ENCODE measurements at regions of chr1 and their contacts with region 1.

Region 1: GRCh38 chr1:94417978-94418663 is at the start of gene ABCD3:
- DNase-seq: peak; percentile 95
- H3K4me3 ChIP-seq: peak within 1 kb of the TSS; percentile 87
- H3K4me3 Mint-ChIP-seq: no peak within 1 kb of the TSS
- H3K27ac Mint-ChIP-seq: peak within 1 kb of the TSS; percentile 74
- H3K4me1 ChIP-seq: peaks cover 27% of the 10 kb centered on the region
- H3K4me1 Mint-ChIP-seq: peaks cover 15% of the 10 kb centered on the region
- H3K27me3 ChIP-seq: no peaks in the 10 kb centered on the region
- H3K27me3 Mint-ChIP-seq: no peaks in the 10 kb centered on the region
- CTCF ChIP-seq: no peak
- total RNA-seq, gene ABCD3: 93.4 and 94.4 TPM in 2 replicates

Region 2: GRCh38 chr1:94342405-94342804 is 75.7 kb before region 1 on chr1:
- CTCF ChIA-PET with region 1: interaction called, 4 read pairs
- POLR2A ChIA-PET with region 1: no interaction called
- intact Hi-C with region 1: loop called (anchors 1 kb)
- DNase-seq: peak; percentile 74 to 83
- H3K4me3 ChIP-seq: no peak overlapping the region
- H3K4me3 Mint-ChIP-seq: peak overlapping the region; percentile 47
- H3K27ac Mint-ChIP-seq: peak overlapping the region; percentile 80
- H3K4me1 ChIP-seq: peaks cover 56% of the 10 kb centered on the region
- H3K4me1 Mint-ChIP-seq: peaks cover 57% of the 10 kb centered on the region
- H3K27me3 ChIP-seq: no peaks in the 10 kb centered on the region
- H3K27me3 Mint-ChIP-seq: no peaks in the 10 kb centered on the region
- CTCF ChIP-seq: no peak

Region 3: GRCh38 chr1:94398356-94398755 is 19.8 kb before region 1 on chr1:
- CTCF ChIA-PET with region 1: no interaction called
- POLR2A ChIA-PET with region 1: no interaction called
- intact Hi-C with region 1: no loop called
- DNase-seq: no peak
- H3K4me3 ChIP-seq: no peak overlapping the region
- H3K4me3 Mint-ChIP-seq: no peak overlapping the region
- H3K27ac Mint-ChIP-seq: no peak overlapping the region
- H3K4me1 ChIP-seq: peaks cover 16% of the 10 kb centered on the region
- H3K4me1 Mint-ChIP-seq: peaks cover 17% of the 10 kb centered on the region
- H3K27me3 ChIP-seq: no peaks in the 10 kb centered on the region
- H3K27me3 Mint-ChIP-seq: no peaks in the 10 kb centered on the region
- CTCF ChIP-seq: no peak